ENCODE measurements at regions of chr1 and their contacts with region 1.

Region 1: DNA sequence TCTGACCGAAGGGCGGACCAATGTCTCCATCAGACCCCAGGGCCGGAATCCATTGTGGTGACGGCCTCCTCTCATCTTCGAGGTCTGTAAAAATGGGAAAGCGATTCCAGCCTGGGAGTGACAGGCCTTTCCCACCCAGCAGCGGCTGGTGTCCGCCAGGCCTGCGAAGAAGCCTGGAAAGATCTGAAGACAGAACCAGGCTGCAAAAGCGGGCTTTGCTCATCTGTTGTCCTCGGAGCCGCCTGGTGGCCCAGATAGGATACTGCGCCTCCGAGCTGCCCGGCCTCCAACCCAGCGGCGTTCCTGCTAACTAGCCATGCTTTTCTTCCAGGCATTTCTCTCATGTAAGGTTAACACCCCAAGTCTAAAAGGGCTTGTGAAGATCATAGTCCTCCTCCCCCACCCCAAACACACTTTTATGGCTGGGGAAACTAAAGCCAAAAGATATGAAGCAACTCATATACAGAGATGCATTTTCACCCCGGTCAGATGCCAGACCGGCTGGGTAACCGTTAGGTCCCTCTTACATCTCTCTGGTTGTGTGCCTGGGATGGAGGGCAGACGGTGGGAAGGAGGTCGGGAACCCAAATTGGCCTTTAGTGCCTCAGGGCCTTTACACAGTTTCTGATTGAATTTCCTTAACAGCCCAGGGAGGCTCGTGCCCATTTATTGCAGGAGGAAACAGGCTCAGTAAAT is 1.9 kb upstream of the DHRS3 start:
- DNase-seq: no peak
- ATAC-seq: peak; percentile 85
- H3K4me3 ChIP-seq: no peak overlapping the region
- H3K27ac ChIP-seq: no peak overlapping the region
- H3K4me1 ChIP-seq: peaks cover 19% of the 10 kb centered on the region
- H3K27me3 ChIP-seq: peaks cover 4 to 13% of the 10 kb centered on the region in 2 experiments; a peak in 3 of 4 replicates
- CTCF ChIP-seq: peak; percentile 97 to 98 (median 97); a peak in 5 of 6 replicates
- EP300 ChIP-seq: no peak
- POLR2A ChIP-seq: no peak
- RAD21 ChIP-seq: peak; percentile 95

Region 2: GRCh38 chr1:12314333-12314903 is 305.5 kb before region 1 on chr1:
- CTCF ChIA-PET with region 1: interaction called, 63 read pairs
- POLR2A ChIA-PET with region 1: no interaction called
- RAD21 ChIA-PET with region 1: interaction called, 37 read pairs
- SMC1A ChIA-PET with region 1: interaction called, 26 read pairs
- in situ Hi-C with region 1: loop called (anchors 5 kb)
- intact Hi-C with region 1: loop called (anchors 1 kb)
- DNase-seq: no peak
- ATAC-seq: peak; percentile 40; the same call in 1 of the 3 replicates
- H3K4me3 ChIP-seq: no peak overlapping the region
- H3K27ac ChIP-seq: no peak overlapping the region
- H3K4me1 ChIP-seq: no peaks in the 10 kb centered on the region
- H3K27me3 ChIP-seq: no peaks in the 10 kb centered on the region
- CTCF ChIP-seq: peak in 2 of 3 experiments; percentile 47 to 52; a peak in 3 of 6 replicates
- EP300 ChIP-seq: no peak
- POLR2A ChIP-seq: no peak
- RAD21 ChIP-seq: peak; percentile 53

Region 3: DNA sequence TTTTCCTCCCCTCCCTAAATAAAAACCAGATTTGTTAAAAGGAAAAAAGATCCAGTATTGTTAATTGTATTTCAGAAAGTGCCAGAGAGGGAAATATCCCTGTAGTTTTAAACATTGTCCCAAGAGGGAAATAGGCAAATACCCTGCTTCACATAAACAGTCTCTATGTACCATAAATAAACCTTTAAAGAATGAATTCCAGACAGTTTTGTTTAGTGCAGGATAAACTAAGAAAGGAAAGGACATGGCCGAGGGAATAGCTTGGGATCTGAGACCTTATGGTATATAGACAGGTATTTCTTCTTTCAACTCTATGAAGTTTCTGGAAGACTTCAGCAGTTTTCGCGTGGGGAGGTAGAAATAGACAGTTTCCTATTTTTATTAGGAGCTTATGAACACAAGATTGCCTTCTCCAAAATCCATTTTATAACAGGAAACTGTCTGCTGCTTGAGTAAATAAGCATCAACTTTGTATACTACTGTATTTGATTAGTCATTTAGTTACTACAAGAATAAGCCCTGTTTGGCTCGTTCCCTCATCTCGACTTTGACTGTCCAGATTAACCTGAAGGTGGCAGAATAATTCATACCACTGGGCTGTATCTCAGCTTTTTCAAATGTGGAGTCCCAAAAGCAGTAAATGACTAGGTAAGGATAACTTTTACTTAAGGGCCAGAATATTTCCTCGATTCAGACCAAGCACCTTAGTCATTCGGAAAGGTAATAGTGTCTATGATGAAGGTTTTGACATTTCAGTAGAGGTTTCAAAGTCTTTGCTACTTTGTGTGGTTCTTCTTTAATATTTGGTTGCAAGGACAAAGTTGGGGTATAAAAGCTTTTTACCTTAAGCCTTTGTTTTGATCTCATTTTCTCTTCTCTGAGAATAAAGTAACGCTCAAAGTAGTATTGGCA is 212.6 kb before region 1 on chr1:
- CTCF ChIA-PET with region 1: interaction called, 26 read pairs
- POLR2A ChIA-PET with region 1: no interaction called
- RAD21 ChIA-PET with region 1: interaction called, 5 read pairs
- SMC1A ChIA-PET with region 1: interaction called, 12 read pairs
- in situ Hi-C with region 1: no loop called
- intact Hi-C with region 1: no loop called
- DNase-seq: peak; percentile 9
- ATAC-seq: 0 out of 3 replicates have a peak, but pooled peaks have one; percentile 42
- H3K4me3 ChIP-seq: no peak overlapping the region
- H3K27ac ChIP-seq: no peak overlapping the region
- H3K4me1 ChIP-seq: no peaks in the 10 kb centered on the region
- H3K27me3 ChIP-seq: no peaks in the 10 kb centered on the region
- CTCF ChIP-seq: peak in 1 of 3 experiments; percentile 28; a peak in 2 of 6 replicates
- EP300 ChIP-seq: no peak
- POLR2A ChIP-seq: no peak
- RAD21 ChIP-seq: peak; percentile 48

Region 4: DNA sequence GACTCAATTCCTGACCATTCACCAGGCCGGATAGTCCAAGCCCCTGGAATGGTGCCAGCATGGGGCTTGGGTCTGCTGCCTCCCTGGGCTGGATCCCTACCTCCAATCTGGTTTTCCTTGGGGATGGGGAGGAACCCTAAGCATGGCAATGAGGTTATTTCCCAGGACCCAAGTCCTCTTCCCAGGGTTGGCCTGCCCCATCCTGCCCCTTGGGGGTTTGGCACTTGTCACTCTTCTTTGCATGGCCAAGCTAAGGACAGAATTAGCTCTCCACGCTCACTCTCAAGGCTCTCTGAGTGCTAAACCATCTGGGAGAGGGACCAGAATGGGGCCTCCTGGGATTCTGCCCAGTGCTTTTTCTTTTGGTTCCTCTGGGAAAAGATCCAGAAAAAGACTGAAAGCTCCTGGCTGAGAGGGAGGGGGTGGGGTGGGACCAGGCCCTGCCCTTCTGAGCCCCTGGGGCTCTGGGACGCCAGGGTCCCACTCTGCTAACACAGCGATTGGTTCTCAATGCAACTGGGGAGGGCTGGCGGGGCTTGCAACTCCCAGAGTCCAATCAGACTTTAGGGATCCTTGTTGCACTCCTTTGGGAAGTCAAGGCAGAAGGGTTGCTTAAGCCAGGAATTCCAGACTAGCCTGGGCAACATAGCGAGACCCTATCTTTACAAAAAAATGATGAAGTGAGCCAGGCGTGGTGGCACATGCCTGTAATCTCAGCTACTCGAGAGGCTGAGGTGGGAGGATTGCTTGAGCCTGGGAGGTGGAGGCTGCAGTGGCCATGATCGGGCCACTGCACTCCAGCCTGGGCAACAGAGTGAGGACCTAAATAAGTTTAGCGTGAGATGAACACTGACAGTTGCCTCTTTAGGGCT is 54.6 kb before region 1 on chr1:
- CTCF ChIA-PET with region 1: no interaction called
- POLR2A ChIA-PET with region 1: no interaction called
- RAD21 ChIA-PET with region 1: no interaction called
- SMC1A ChIA-PET with region 1: no interaction called
- in situ Hi-C with region 1: no loop called
- intact Hi-C with region 1: no loop called
- DNase-seq: no peak
- ATAC-seq: no peak
- H3K4me3 ChIP-seq: no peak overlapping the region
- H3K27ac ChIP-seq: no peak overlapping the region
- H3K4me1 ChIP-seq: no peaks in the 10 kb centered on the region
- H3K27me3 ChIP-seq: no peaks in the 10 kb centered on the region
- CTCF ChIP-seq: no peak
- EP300 ChIP-seq: no peak
- POLR2A ChIP-seq: no peak
- RAD21 ChIP-seq: no peak

Region 5: DNA sequence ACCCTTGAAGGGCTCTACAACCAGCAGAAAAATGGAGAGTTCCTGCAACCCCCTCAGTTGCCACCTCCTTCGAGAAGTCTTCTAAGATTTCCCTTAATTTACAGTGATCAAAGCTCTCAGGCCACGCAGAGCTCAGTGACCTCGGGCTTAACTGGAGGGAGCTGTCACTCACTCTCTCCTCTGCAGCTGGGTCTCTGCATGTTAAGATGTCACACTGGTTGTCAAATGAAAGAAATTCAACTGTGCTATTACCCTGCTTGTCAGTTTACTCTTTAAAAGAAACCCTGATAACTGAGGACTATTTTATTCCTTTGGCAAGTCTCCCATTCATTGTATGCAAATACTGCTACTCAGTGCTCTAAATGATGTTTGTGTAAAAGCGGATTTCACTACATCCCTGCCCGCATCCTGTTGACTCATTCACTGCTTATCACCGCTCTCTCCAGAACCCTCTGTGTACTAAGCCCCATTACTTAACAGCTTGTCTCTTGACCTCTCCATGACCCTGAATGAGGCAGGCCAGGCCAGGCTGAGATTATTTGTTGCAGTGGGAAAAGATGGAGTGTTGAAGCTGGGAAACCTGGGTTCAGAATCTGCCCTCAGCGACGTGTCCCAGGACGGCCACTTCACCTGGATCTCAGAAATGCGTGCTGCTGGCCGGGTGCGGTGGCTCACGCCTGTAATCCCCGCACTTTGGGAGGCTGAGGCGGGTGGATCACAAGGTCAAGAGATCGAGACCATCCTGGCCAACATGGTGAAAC is 15.6 kb before region 1 on chr1:
- CTCF ChIA-PET with region 1: interaction called, 47 read pairs
- POLR2A ChIA-PET with region 1: interaction called, 9 read pairs
- RAD21 ChIA-PET with region 1: interaction called, 50 read pairs
- SMC1A ChIA-PET with region 1: interaction called, 49 read pairs
- in situ Hi-C with region 1: no loop called
- intact Hi-C with region 1: no loop called
- DNase-seq: no peak
- ATAC-seq: peak; percentile 84
- H3K4me3 ChIP-seq: no peak overlapping the region
- H3K27ac ChIP-seq: no peak overlapping the region
- H3K4me1 ChIP-seq: no peaks in the 10 kb centered on the region
- H3K27me3 ChIP-seq: no peaks in the 10 kb centered on the region; a peak in 1 of 4 replicates
- CTCF ChIP-seq: no peak
- EP300 ChIP-seq: no peak
- POLR2A ChIP-seq: no peak
- RAD21 ChIP-seq: no peak

Measured in GM12878 (cell line).